T-cell (primary cell): ENCODE measurements at regions of chr2 and their contacts with region 1.

Region 1: DNA sequence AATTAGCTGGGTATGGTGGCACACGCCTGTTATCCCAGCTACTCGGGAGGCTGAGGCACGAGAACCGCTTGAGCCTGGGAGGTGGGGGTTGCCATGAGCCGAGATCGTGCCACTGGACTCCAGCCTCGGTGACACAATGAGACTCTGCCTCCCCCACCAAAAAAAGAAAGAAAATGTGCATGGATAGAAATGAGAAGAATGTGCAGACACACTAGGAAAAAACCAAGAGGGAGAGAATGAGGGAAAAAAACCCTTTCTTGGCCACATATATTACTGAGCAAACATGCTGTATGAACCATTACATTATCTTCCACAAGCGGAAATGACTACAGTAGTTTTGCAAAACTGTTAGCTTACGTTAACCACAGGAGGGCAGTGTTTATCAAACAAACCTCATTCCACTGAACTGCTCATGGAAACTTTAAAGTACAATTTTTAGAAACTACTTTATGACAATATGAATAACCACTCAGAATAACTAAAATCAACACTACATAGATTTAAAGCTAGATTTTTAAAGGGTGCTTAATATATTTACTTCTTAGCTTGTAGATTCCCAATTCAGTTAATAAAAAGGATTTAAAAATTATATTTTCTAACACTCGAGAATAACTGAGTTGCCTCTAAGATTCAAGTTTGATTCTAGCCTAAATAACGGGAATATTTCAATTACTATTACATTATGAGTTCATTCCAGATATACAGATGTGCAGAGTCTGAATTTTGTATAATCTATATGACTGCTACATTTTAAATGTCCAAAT is 26.4 kb downstream of the ASXL2 start:
- DNase-seq: peak in 12 of 35 experiments; percentile 7 to 82 (median 22)
- ATAC-seq: peak; percentile 91 to 96 (median 94)
- H3K4me3 ChIP-seq: no peak overlapping the region
- H3K4me3 Mint-ChIP-seq: peak overlapping the region; percentile 57 to 64 (median 57)
- H3K27ac ChIP-seq: peak overlapping the region; percentile 18
- H3K27ac Mint-ChIP-seq: peak overlapping the region; percentile 74 to 77
- H3K4me1 ChIP-seq: peaks cover 13 to 20% of the 10 kb centered on the region in 2 experiments
- H3K4me1 Mint-ChIP-seq: peaks cover 38 to 51% (median 48%) of the 10 kb centered on the region in 3 donors
- H3K27me3 ChIP-seq: no peaks in the 10 kb centered on the region
- H3K27me3 Mint-ChIP-seq: no peaks in the 10 kb centered on the region

Region 2: GRCh38 chr2:25265802-25266201 is 586.1 kb before region 1 on chr2:
- CTCF ChIA-PET with region 1: no interaction called
- POLR2A ChIA-PET with region 1: no interaction called
- DNase-seq: peak in 20 of 35 experiments; percentile 22 to 50 (median 38)
- ATAC-seq: peak; percentile 61 to 82 (median 78)
- H3K4me3 ChIP-seq: no peak overlapping the region
- H3K4me3 Mint-ChIP-seq: no peak overlapping the region
- H3K27ac ChIP-seq: peak overlapping the region; percentile 50
- H3K27ac Mint-ChIP-seq: peak overlapping the region; percentile 89 to 90
- H3K4me1 ChIP-seq: peaks cover 11 to 16% of the 10 kb centered on the region in 2 experiments
- H3K4me1 Mint-ChIP-seq: peaks cover 44 to 59% (median 51%) of the 10 kb centered on the region in 3 donors
- H3K27me3 ChIP-seq: no peaks in the 10 kb centered on the region
- H3K27me3 Mint-ChIP-seq: no peaks in the 10 kb centered on the region

Region 3: DNA sequence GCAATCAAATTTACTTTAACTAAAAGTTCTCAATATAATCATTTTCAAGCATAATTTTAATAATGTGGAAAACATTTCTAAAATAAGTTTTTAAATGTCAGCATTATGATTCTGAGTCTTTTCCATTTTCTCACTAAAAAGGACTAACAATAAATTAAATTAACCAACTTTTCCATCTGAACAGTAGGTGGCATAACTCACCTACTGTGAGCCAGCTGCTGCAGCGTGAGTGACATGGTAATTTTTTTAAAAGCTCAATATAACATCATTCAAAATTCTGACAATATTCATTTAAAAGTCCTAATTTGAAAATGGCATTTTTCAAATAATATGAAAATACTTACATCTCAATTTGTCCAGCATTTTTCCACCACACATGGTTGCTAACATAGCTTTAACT is 245.0 kb before region 1 on chr2:
- CTCF ChIA-PET with region 1: interaction called in 1 of 2 experiments, 24 read pairs
- POLR2A ChIA-PET with region 1: no interaction called
- DNase-seq: peak in 1 of 35 experiments; percentile 57
- ATAC-seq: no peak
- H3K4me3 ChIP-seq: no peak overlapping the region
- H3K4me3 Mint-ChIP-seq: no peak overlapping the region
- H3K27ac ChIP-seq: no peak overlapping the region
- H3K27ac Mint-ChIP-seq: no peak overlapping the region
- H3K4me1 ChIP-seq: no peaks in the 10 kb centered on the region
- H3K4me1 Mint-ChIP-seq: peaks cover 0 to 6% (median 5%) of the 10 kb centered on the region in 3 donors
- H3K27me3 ChIP-seq: no peaks in the 10 kb centered on the region
- H3K27me3 Mint-ChIP-seq: no peaks in the 10 kb centered on the region

Region 4: GRCh38 chr2:25794544-25795276 is 57.2 kb before region 1 on chr2:
- CTCF ChIA-PET with region 1: interaction called in 1 of 2 experiments, 15 read pairs
- POLR2A ChIA-PET with region 1: no interaction called
- DNase-seq: peak in 2 of 35 experiments; percentile 5 to 60
- ATAC-seq: peak; percentile 84 to 93 (median 90)
- H3K4me3 ChIP-seq: peak overlapping the region in 1 of 2 donors; percentile 18
- H3K4me3 Mint-ChIP-seq: peak overlapping the region; percentile 74 to 81 (median 79)
- H3K27ac ChIP-seq: peak overlapping the region; percentile 78
- H3K27ac Mint-ChIP-seq: peak overlapping the region; percentile 94 to 98
- H3K4me1 ChIP-seq: peaks cover 33 to 38% of the 10 kb centered on the region in 2 experiments
- H3K4me1 Mint-ChIP-seq: peaks cover 78 to 85% (median 85%) of the 10 kb centered on the region in 3 donors
- H3K27me3 ChIP-seq: no peaks in the 10 kb centered on the region
- H3K27me3 Mint-ChIP-seq: no peaks in the 10 kb centered on the region

Region 5: DNA sequence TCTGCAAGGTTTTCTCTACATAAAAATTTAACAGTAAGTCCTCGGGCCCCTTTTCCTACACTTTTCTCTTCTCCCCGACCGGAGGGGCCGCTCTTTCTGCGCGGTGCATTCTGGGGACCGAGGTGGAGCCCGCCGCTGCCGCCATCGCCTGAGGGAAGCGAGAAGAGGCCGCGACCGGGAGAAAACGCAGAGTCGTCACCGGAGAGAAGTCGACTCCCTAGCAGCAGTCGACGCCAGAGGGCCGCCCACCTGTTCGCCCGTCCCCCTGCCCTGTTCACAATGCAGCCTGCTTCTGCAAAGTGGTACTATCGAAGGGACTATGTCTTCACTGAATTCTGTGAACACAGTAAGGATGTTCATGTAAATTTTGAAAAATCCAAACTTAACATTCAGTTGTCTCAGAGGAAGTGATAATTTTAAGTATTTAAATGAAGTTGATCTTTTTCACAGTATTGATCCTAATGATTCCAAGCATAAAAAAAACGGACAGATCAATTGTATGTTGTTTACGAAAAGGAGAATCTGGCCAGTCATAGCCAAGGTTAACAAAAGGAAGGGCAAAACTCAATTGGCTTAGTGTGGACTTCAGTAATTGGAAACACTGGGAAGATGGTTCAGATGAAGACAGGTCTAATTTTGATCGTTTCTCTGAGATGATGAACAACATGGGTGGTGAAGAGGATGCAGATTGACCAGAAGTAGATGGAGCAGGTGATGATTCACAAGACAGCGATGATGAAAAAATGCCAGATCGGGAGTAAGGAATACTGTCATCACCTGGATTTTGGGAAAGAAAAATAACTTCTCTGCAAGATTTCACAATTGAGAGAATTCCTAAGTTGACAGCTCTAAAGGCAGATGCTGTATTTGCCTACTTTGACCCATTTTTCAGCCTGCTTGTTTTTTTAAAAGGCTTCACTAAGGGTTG is 29.5 kb before region 1 on chr2:
- CTCF ChIA-PET with region 1: interaction called in 1 of 2 experiments, 24 read pairs
- POLR2A ChIA-PET with region 1: no interaction called
- DNase-seq: peak; percentile 39 to 82 (median 63)
- ATAC-seq: peak; percentile 78 to 89 (median 80)
- H3K4me3 ChIP-seq: peak overlapping the region; percentile 5 to 46
- H3K4me3 Mint-ChIP-seq: peak overlapping the region; percentile 77 to 81 (median 78)
- H3K27ac ChIP-seq: peak overlapping the region; percentile 62
- H3K27ac Mint-ChIP-seq: peak overlapping the region; percentile 80 to 84
- H3K4me1 ChIP-seq: peaks cover 9 to 25% of the 10 kb centered on the region in 2 experiments
- H3K4me1 Mint-ChIP-seq: peaks cover 70 to 73% (median 71%) of the 10 kb centered on the region in 3 donors
- H3K27me3 ChIP-seq: no peaks in the 10 kb centered on the region
- H3K27me3 Mint-ChIP-seq: no peaks in the 10 kb centered on the region

Region 6: GRCh38 chr2:25867396-25868003 is 15.6 kb after region 1 on chr2:
- CTCF ChIA-PET with region 1: interaction called, 6 to 22 read pairs
- POLR2A ChIA-PET with region 1: no interaction called
- DNase-seq: no peak
- ATAC-seq: no peak
- H3K4me3 ChIP-seq: no peak overlapping the region
- H3K4me3 Mint-ChIP-seq: no peak overlapping the region
- H3K27ac ChIP-seq: no peak overlapping the region
- H3K27ac Mint-ChIP-seq: no peak overlapping the region
- H3K4me1 ChIP-seq: peaks cover 0 to 5% of the 10 kb centered on the region in 2 experiments
- H3K4me1 Mint-ChIP-seq: peaks cover 18 to 23% (median 23%) of the 10 kb centered on the region in 3 donors
- H3K27me3 ChIP-seq: no peaks in the 10 kb centered on the region
- H3K27me3 Mint-ChIP-seq: no peaks in the 10 kb centered on the region

Region 7: GRCh38 chr2:25878361-25879132 is 26.6 kb after region 1 on chr2 and contains the start of gene ASXL2:
- CTCF ChIA-PET with region 1: interaction called, 6 to 25 read pairs
- POLR2A ChIA-PET with region 1: interaction called in 1 of 2 experiments, 7 read pairs
- DNase-seq: peak; percentile 90 to 100 (median 97)
- ATAC-seq: peak; percentile 87 to 96 (median 91)
- H3K4me3 ChIP-seq: peak within 1 kb of the TSS; percentile 98 to 99
- H3K4me3 Mint-ChIP-seq: peak within 1 kb of the TSS; percentile 97 to 99 (median 98)
- H3K27ac ChIP-seq: peak within 1 kb of the TSS; percentile 94
- H3K27ac Mint-ChIP-seq: peak within 1 kb of the TSS; percentile 97 to 100
- H3K4me1 ChIP-seq: peaks cover 15% of the 10 kb centered on the region in 2 experiments
- H3K4me1 Mint-ChIP-seq: peaks cover 38 to 41% (median 39%) of the 10 kb centered on the region in 3 donors
- H3K27me3 ChIP-seq: no peaks in the 10 kb centered on the region
- H3K27me3 Mint-ChIP-seq: peaks cover 0 to under 1% of the 10 kb centered on the region in 2 donors
- total RNA-seq, gene ASXL2: 36.3 to 53.2 (median 48.3) TPM

Region 8: DNA sequence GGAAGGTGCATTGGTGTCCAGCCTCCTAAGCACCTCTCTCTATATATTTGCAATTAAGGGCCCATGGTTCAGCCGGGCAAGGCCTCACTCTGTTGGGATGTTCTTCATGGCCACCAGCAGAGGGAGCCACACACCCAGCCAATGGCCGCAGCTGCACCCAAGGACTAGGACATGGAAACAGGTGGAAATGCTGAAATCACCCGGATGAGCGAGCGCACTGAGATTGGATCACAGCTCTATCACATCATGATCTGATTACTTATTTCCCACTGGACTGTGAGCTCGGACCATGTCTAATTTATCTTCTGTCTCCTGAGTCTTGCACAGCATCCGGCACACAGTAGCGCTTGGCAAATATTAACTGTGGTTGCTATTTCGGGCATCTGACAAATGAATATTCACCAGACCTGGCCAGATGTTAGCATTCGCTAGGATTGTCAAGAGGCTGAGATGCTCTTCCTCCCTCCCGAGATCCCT is 99.2 kb after region 1 on chr2:
- CTCF ChIA-PET with region 1: interaction called, 5 to 28 read pairs
- POLR2A ChIA-PET with region 1: interaction called in 1 of 2 experiments, 4 read pairs
- DNase-seq: peak; percentile 35 to 85 (median 65)
- ATAC-seq: peak; percentile 85 to 94 (median 88)
- H3K4me3 ChIP-seq: no peak overlapping the region
- H3K4me3 Mint-ChIP-seq: no peak overlapping the region
- H3K27ac ChIP-seq: no peak overlapping the region
- H3K27ac Mint-ChIP-seq: no peak overlapping the region
- H3K4me1 ChIP-seq: no peaks in the 10 kb centered on the region
- H3K4me1 Mint-ChIP-seq: peaks cover 0 to 2% (median 0%) of the 10 kb centered on the region in 3 donors
- H3K27me3 ChIP-seq: no peaks in the 10 kb centered on the region
- H3K27me3 Mint-ChIP-seq: no peaks in the 10 kb centered on the region

Region 9: GRCh38 chr2:26157580-26157979 is 305.7 kb after region 1 on chr2:
- CTCF ChIA-PET with region 1: no interaction called
- POLR2A ChIA-PET with region 1: no interaction called
- DNase-seq: no peak
- ATAC-seq: no peak
- H3K4me3 ChIP-seq: no peak overlapping the region
- H3K4me3 Mint-ChIP-seq: no peak overlapping the region
- H3K27ac ChIP-seq: no peak overlapping the region
- H3K27ac Mint-ChIP-seq: no peak overlapping the region
- H3K4me1 ChIP-seq: no peaks in the 10 kb centered on the region
- H3K4me1 Mint-ChIP-seq: no peaks in the 10 kb centered on the region
- H3K27me3 ChIP-seq: no peaks in the 10 kb centered on the region
- H3K27me3 Mint-ChIP-seq: peaks cover 3 to 8% of the 10 kb centered on the region in 2 donors